ENCODE measurements at regions of chr1 and their contacts with region 1.

Region 1: GRCh38 chr1:204128964-204129896 is 22.6 kb downstream of the ETNK2 start:
- DNase-seq: peak; percentile 73 to 95 (median 92)
- ATAC-seq: peak; percentile 64 to 72 (median 69)
- H3K4me3 ChIP-seq: peak overlapping the region; percentile 20 to 66 (median 56)
- H3K27ac ChIP-seq: peak overlapping the region; percentile 63 to 83 (median 66)
- H3K4me1 ChIP-seq: peaks cover 0 to 59% (median 30%) of the 10 kb centered on the region in 4 donors
- H3K27me3 ChIP-seq: no peaks in the 10 kb centered on the region
- CTCF ChIP-seq: peak; percentile 84 to 94 (median 92)
- POLR2A ChIP-seq: no peak

Region 2: DNA sequence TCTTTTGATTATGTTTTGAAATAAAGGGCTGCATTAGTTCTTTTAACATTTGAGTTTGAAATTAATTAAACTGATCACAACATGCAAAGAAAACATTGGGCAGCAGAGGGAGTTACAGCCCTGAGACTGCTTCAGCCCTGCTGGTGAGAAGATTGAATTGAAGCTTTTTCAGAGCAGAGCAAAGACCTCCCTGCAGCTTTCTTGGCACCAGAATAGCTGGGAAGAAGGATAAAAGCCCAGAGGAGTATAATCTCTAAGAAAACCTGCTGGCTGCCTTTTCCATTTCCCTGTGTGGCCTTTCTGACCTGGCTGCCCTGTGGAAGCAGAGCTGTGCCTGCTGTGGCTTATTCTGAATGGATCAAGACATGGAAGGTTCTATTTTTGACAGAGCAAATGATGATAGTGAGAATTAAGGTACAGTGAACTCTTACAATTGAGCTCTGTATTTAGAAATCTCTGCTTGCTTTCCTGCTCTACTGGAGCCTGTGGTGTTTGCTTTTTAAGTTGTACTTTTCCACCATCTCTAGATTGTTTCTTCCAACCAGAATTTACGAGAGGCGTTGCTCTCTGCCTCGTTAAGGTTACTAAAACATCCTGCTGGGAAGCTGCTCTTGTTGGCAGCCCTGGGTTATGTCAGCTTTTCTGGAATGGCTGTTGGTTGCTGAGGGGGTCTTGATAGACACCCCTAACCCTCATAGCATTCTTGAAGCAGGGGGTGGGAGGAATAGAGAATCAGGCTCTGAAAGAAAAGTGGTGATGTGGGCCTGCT is 257.9 kb before region 1 on chr1:
- intact Hi-C with region 1: loop called (anchors 5 kb)
- DNase-seq: peak in 1 of 3 donors; percentile 49
- ATAC-seq: peak; percentile 91 to 98 (median 95)
- H3K4me3 ChIP-seq: no peak overlapping the region
- H3K27ac ChIP-seq: no peak overlapping the region
- H3K4me1 ChIP-seq: peaks cover 0 to 5% (median 0%) of the 10 kb centered on the region in 4 donors
- H3K27me3 ChIP-seq: no peaks in the 10 kb centered on the region
- CTCF ChIP-seq: peak; percentile 77 to 97 (median 79)
- POLR2A ChIP-seq: no peak

Region 3: GRCh38 chr1:203968728-203969127 is 160.5 kb before region 1 on chr1:
- intact Hi-C with region 1: no loop called
- DNase-seq: no peak
- ATAC-seq: no peak
- H3K4me3 ChIP-seq: no peak overlapping the region
- H3K27ac ChIP-seq: no peak overlapping the region
- H3K4me1 ChIP-seq: no peaks in the 10 kb centered on the region
- H3K27me3 ChIP-seq: no peaks in the 10 kb centered on the region
- CTCF ChIP-seq: no peak
- POLR2A ChIP-seq: no peak

Region 4: GRCh38 chr1:204072931-204073836 is 56.0 kb before region 1 on chr1 and contains the start of gene SOX13:
- intact Hi-C with region 1: loop called in 1 of 2 experiments (anchors 10 kb)
- DNase-seq: peak; percentile 92 to 93 (median 93)
- ATAC-seq: peak; percentile 73 to 82 (median 78)
- H3K4me3 ChIP-seq: peak within 1 kb of the TSS; percentile 50 to 81 (median 77)
- H3K27ac ChIP-seq: peak within 1 kb of the TSS; percentile 55 to 84 (median 67)
- H3K4me1 ChIP-seq: peaks cover 0 to 25% (median 13%) of the 10 kb centered on the region in 4 donors
- H3K27me3 ChIP-seq: no peaks in the 10 kb centered on the region
- CTCF ChIP-seq: peak in 2 of 4 donors; percentile 13 to 14
- POLR2A ChIP-seq: peak; percentile 87
- total RNA-seq, gene SOX13: 12.5 to 29.1 (median 17.1) TPM

Region 5: GRCh38 chr1:204080163-204080903 is 48.9 kb before region 1 on chr1:
- intact Hi-C with region 1: loop called (anchors 5 to 10 kb)
- DNase-seq: peak; percentile 70 to 78 (median 75)
- ATAC-seq: peak; percentile 46 to 70 (median 60)
- H3K4me3 ChIP-seq: no peak overlapping the region
- H3K27ac ChIP-seq: peak overlapping the region in 2 of 3 donors; percentile 33 to 51
- H3K4me1 ChIP-seq: peaks cover 0 to 75% (median 40%) of the 10 kb centered on the region in 4 donors
- H3K27me3 ChIP-seq: no peaks in the 10 kb centered on the region
- CTCF ChIP-seq: no peak
- POLR2A ChIP-seq: no peak

Region 6: GRCh38 chr1:204363335-204364124 is 234.3 kb after region 1 on chr1:
- intact Hi-C with region 1: no loop called
- DNase-seq: peak; percentile 62 to 67 (median 66)
- ATAC-seq: peak; percentile 88 to 97 (median 94)
- H3K4me3 ChIP-seq: peak overlapping the region; percentile 19 to 46 (median 42)
- H3K27ac ChIP-seq: peak overlapping the region; percentile 55 to 76 (median 61)
- H3K4me1 ChIP-seq: peaks cover 0 to 8% (median 2%) of the 10 kb centered on the region in 4 donors
- H3K27me3 ChIP-seq: no peaks in the 10 kb centered on the region
- CTCF ChIP-seq: peak; percentile 95 to 97 (median 96)
- POLR2A ChIP-seq: no peak